A673 (cell line): ENCODE measurements at regions of chr15 and their contacts with region 1.

Region 1: DNA sequence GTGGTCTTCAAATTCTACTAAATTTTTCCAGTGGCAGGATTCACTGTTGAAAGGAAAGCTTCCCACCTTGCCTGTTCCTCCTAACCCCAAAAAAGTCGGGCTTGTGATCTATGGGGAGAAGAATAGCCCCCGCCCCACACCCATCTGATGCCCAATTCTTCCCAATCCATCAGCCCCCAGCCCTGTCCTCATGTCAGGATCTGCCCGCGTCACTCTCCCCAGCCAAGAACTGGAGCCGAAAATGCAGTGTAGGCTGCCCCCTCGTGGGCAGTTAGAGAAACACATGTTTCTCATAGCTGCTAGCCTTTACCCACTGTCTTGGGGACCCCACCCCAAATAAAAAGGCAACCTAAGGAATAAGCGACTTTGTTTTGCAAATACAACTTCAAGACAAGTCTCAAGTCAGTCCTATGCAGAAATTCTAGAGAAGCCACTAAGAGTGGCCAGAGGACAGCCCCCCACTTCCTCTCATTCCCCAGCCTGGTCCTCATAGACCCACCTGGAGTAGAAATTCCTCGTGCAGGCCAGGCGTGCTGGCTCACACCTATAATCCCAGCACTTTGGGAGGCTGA is 13.0 kb upstream of the CSK start:
- DNase-seq: peak; percentile 78
- H3K4me3 ChIP-seq: no peak overlapping the region
- H3K27ac ChIP-seq: no peak overlapping the region
- H3K4me1 ChIP-seq: peaks cover 10% of the 10 kb centered on the region
- H3K27me3 ChIP-seq: no peaks in the 10 kb centered on the region
- CTCF ChIP-seq: peak; percentile 89

Region 2: DNA sequence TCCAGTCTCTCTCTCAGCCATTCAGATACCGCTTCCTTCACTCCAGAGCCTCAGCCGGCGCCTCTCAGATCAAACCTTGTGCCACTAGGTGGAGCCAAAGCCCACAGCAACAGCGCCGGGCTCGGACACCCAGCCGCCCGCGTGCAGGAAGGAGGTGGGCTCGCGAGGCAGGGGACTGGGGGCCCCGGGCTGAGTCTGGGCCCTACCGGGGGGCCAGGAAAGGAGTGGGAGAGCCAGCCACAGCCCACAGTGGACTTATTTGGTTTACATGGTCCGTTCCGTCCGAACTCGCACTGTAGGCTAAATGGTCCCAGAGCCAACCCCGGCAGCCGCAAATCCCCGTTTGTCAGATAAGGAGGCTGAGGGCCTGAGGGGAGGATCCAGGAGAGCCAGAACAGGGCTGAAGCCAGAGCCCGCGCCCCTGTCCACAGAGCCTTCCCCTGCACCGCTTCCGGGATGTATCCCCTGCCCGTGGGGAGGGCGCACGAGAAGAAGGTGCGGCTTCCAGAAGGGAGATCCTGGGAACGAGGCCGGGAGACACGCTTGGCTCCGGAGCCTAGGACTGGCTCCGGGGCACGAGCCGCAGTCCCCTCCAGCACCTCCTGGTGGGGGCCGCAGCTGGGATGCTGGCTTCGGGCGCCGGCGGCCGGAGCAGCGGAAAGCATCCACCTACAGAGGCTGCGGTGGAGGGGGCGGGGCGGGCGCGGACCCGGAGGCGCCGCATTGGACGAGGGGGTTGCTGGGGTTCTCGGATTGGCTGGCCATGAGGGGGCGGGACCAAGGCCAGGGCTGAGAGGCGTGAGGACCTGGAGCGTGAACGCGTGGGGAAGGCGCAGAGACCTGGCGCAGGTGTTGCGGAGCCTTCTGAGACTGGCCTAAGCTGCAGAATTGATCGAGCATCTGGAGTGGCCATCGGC is 394.9 kb before region 1 on chr15:
- CTCF ChIA-PET with region 1: interaction called, 4 read pairs
- POLR2A ChIA-PET with region 1: no interaction called
- intact Hi-C with region 1: loop called (anchors 5 kb)
- DNase-seq: peak; percentile 95
- H3K4me3 ChIP-seq: peak overlapping the region; percentile 53
- H3K27ac ChIP-seq: no peak overlapping the region
- H3K4me1 ChIP-seq: peaks cover 7% of the 10 kb centered on the region
- H3K27me3 ChIP-seq: peaks cover 28% of the 10 kb centered on the region
- CTCF ChIP-seq: peak; percentile 93

Region 3: GRCh38 chr15:74781431-74782258 is 12.8 kb after region 1 on chr15 and contains the start of gene CSK:
- CTCF ChIA-PET with region 1: interaction called, 11 read pairs
- POLR2A ChIA-PET with region 1: interaction called, 3 read pairs
- intact Hi-C with region 1: no loop called
- DNase-seq: peak; percentile 87
- H3K4me3 ChIP-seq: peak within 1 kb of the TSS; percentile 93
- H3K27ac ChIP-seq: peak within 1 kb of the TSS; percentile 78
- H3K4me1 ChIP-seq: peaks cover 61% of the 10 kb centered on the region
- H3K27me3 ChIP-seq: no peaks in the 10 kb centered on the region
- CTCF ChIP-seq: peak; percentile 47
- total RNA-seq, gene CSK: 90.8 and 103 TPM in 2 replicates

Region 4: GRCh38 chr15:74799856-74800547 is 31.1 kb after region 1 on chr15:
- CTCF ChIA-PET with region 1: interaction called, 8 read pairs
- POLR2A ChIA-PET with region 1: no interaction called
- intact Hi-C with region 1: loop called (anchors 1 kb)
- DNase-seq: peak; percentile 69
- H3K4me3 ChIP-seq: no peak overlapping the region
- H3K27ac ChIP-seq: no peak overlapping the region
- H3K4me1 ChIP-seq: no peaks in the 10 kb centered on the region
- H3K27me3 ChIP-seq: no peaks in the 10 kb centered on the region
- CTCF ChIP-seq: peak; percentile 93

Region 5: DNA sequence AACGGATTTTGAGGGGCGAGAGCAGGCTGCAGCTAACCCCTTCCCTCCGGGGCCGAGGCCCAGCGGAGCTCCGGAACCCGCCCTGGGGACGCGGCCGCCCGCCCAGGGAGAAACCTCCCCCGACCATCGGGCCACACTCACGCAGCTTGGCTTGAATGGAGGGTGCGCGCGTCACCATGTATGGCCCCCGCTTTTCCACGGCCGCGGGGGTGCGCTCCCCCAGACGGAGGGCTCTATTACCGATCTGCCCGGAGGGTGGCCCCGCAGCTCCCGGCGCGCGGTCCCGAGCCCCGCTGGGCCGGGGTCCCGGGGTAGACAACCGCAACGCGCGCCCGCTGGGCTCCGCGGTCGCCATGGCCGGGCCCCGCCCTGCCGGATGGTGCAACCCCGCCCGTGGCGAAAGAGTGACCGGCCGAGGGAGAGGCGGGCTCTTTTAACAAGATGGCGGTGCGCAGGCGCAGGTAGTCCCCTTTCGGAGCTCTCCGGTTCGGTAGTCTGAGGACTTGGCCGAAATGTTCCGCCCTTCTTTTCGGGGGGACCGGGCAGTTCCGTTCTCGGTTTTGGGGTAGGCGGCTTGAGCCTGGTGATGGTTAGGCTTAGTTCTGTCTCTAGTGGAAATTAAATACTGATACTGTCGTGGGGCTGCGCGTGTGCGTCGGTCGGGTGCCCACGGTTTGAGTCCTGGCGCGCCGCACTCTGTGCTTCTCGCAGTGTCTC is 137.7 kb after region 1 on chr15 and contains the start of gene FAM219B:
- CTCF ChIA-PET with region 1: interaction called, 19 read pairs
- POLR2A ChIA-PET with region 1: no interaction called
- intact Hi-C with region 1: no loop called
- DNase-seq: peak; percentile 87
- H3K4me3 ChIP-seq: peak within 1 kb of the TSS; percentile 85
- H3K27ac ChIP-seq: peak within 1 kb of the TSS; percentile 96
- H3K4me1 ChIP-seq: no peaks in the 10 kb centered on the region
- H3K27me3 ChIP-seq: no peaks in the 10 kb centered on the region
- CTCF ChIP-seq: no peak
- total RNA-seq, gene FAM219B: 86.6 and 93.2 TPM in 2 replicates

Region 6: DNA sequence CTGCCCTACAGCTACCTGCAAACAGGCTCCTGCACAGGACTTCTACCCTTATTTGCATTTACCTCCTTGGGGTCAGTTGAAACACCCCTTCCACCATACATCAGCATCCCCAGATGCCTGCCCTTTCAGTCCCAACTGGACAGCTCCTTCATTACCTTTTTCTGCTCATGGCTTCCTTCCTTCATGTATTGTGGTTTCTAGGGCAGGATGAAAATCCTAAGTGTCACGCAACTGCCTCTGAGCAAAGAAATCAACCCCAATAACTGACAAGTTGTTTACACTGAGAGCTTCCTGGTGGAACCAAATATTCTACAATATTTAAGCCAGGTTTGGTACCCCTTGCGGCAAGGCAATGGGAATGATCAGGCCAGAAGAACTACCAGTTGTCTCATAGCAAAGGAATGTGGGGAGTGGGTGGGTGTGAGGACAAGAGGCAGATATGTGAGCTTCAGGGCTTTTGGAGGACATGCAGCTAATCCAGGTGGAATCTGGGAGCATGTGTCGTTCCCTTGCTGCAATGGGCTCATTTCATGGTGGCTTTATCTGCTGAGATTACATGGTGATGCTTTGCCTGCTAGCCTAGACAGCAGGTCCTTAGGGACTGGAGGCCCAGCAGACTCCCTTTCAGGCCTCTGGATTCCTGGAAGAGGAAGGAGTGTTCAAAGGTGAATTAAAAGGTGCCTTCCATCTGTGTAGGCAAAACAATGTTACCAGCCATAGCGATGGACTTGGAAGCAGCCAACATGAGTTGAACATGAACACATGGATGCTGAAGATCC is 289.5 kb after region 1 on chr15:
- CTCF ChIA-PET with region 1: no interaction called
- POLR2A ChIA-PET with region 1: no interaction called
- intact Hi-C with region 1: no loop called
- DNase-seq: no peak
- H3K4me3 ChIP-seq: no peak overlapping the region
- H3K27ac ChIP-seq: no peak overlapping the region
- H3K4me1 ChIP-seq: peaks cover 5% of the 10 kb centered on the region
- H3K27me3 ChIP-seq: no peaks in the 10 kb centered on the region
- CTCF ChIP-seq: no peak

Region 7: GRCh38 chr15:75307778-75308391 is 539.0 kb after region 1 on chr15:
- CTCF ChIA-PET with region 1: no interaction called
- POLR2A ChIA-PET with region 1: no interaction called
- intact Hi-C with region 1: no loop called
- DNase-seq: peak; percentile 69
- H3K4me3 ChIP-seq: no peak overlapping the region
- H3K27ac ChIP-seq: no peak overlapping the region
- H3K4me1 ChIP-seq: no peaks in the 10 kb centered on the region
- H3K27me3 ChIP-seq: no peaks in the 10 kb centered on the region
- CTCF ChIP-seq: peak; percentile 66